ENCODE measurements at regions of chr4 and their contacts with region 1.

Region 1: GRCh38 chr4:138242076-138242833 is at the start of gene SLC7A11:
- DNase-seq: peak; percentile 93
- ATAC-seq: peak; percentile 90
- H3K4me3 ChIP-seq: peak within 1 kb of the TSS; percentile 81
- H3K27ac ChIP-seq: peak within 1 kb of the TSS; percentile 83
- H3K4me1 ChIP-seq: no peaks in the 10 kb centered on the region
- H3K27me3 ChIP-seq: no peaks in the 10 kb centered on the region
- CTCF ChIP-seq: no peak
- EP300 ChIP-seq: peak; percentile 42 to 68; a peak in 2 of 4 replicates
- POLR2A ChIP-seq: peak; percentile 97
- RAD21 ChIP-seq: no peak
- polyA plus RNA-seq, gene SLC7A11: 1.6 to 2.2 TPM

Region 2: DNA sequence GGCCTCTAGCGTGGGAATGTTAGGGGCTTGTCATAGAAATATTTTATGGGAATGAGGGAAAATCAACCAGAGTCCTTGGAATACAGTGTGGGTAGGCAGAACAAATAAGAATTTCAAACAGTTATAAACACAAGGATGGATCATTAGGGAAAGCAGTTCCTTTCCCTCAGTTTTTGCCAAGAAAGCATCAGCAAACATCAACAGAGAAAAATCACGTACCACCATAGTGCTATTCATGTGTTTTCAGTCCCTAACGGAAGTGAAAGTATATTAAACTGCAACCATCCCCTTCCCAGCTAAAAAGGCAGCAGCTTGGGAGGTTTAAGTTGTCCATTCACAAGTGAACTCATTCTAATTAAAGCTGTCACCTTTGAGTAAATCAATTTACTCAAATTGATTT is 375.6 kb before region 1 on chr4:
- CTCF ChIA-PET with region 1: no interaction called
- POLR2A ChIA-PET with region 1: no interaction called
- RAD21 ChIA-PET with region 1: no interaction called
- SMC1A ChIA-PET with region 1: no interaction called
- in situ Hi-C with region 1: no loop called
- intact Hi-C with region 1: no loop called
- DNase-seq: no peak
- ATAC-seq: no peak
- H3K4me3 ChIP-seq: no peak overlapping the region
- H3K27ac ChIP-seq: no peak overlapping the region
- H3K4me1 ChIP-seq: no peaks in the 10 kb centered on the region
- H3K27me3 ChIP-seq: no peaks in the 10 kb centered on the region
- CTCF ChIP-seq: no peak
- EP300 ChIP-seq: no peak
- POLR2A ChIP-seq: no peak
- RAD21 ChIP-seq: no peak

Region 3: GRCh38 chr4:138182838-138183426 is 59.3 kb before region 1 on chr4:
- CTCF ChIA-PET with region 1: interaction called, 21 read pairs
- POLR2A ChIA-PET with region 1: interaction called, 6 read pairs
- RAD21 ChIA-PET with region 1: interaction called, 26 read pairs
- SMC1A ChIA-PET with region 1: interaction called, 40 read pairs
- in situ Hi-C with region 1: no loop called
- intact Hi-C with region 1: no loop called
- DNase-seq: no peak
- ATAC-seq: peak; percentile 61
- H3K4me3 ChIP-seq: no peak overlapping the region
- H3K27ac ChIP-seq: no peak overlapping the region
- H3K4me1 ChIP-seq: no peaks in the 10 kb centered on the region
- H3K27me3 ChIP-seq: no peaks in the 10 kb centered on the region
- CTCF ChIP-seq: peak; percentile 35 to 67 (median 59); a peak in 5 of 6 replicates
- EP300 ChIP-seq: no peak
- POLR2A ChIP-seq: no peak
- RAD21 ChIP-seq: peak; percentile 84

Region 4: DNA sequence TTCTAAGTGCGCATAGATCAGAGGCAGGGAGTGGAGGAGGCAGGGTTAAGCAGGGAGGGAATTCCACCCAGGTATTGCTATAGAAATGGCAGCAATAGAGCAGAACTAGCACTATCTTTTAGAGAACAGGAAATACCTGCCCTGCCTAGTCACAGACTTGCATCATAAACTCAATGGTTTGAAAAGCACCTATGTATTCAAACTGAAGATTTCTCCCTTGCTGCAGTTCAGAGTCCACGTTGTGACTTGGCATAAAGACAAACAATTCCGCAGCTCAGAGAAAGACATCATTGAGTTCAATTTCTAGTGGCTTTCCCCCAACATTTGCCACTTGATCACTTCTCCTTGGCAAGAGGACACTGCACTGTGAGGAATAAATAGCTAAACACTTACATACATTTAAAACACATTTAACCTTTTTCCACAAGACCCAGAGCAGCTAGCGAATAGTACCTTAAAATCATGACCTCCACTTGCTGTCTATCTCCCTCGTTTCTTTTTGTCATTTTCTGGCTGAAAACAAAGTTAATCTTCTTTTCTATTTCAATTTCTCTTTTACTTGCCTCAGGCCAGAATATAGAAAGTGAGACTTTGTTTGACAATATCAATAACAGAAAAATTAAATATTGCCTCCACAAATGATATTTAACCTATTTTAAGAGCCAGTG is 42.6 kb before region 1 on chr4:
- CTCF ChIA-PET with region 1: interaction called, 8 read pairs
- POLR2A ChIA-PET with region 1: interaction called, 24 read pairs
- RAD21 ChIA-PET with region 1: interaction called, 56 read pairs
- SMC1A ChIA-PET with region 1: interaction called, 68 read pairs
- in situ Hi-C with region 1: no loop called
- intact Hi-C with region 1: no loop called
- DNase-seq: no peak
- ATAC-seq: peak; percentile 89
- H3K4me3 ChIP-seq: peak overlapping the region; percentile 53; the same call in 1 of the 2 replicates
- H3K27ac ChIP-seq: peak overlapping the region; percentile 74
- H3K4me1 ChIP-seq: peaks cover 3% of the 10 kb centered on the region; the same call in 1 of the 2 replicates
- H3K27me3 ChIP-seq: no peaks in the 10 kb centered on the region
- CTCF ChIP-seq: no peak
- EP300 ChIP-seq: no peak
- POLR2A ChIP-seq: no peak
- RAD21 ChIP-seq: no peak

Region 5: DNA sequence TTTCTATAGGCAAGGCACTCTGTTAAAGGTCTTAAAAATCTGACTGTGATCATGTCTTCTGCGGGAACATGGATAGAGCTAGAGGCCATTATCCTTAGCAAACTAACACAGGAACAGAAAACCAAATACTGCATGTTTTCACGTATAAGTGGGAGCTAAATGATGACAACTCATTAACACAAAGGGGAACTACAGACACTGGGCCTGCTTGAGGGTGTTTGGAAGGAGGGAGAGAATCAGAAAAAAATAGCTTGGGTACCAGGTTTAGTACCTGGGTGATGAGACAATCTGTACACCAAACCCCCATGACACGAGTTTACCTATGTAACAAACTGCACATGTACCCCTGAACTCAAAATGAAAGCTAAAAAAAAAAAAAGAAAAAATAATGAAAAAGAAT is 12.2 kb before region 1 on chr4:
- CTCF ChIA-PET with region 1: interaction called, 4 read pairs
- POLR2A ChIA-PET with region 1: interaction called, 22 read pairs
- RAD21 ChIA-PET with region 1: interaction called, 47 read pairs
- SMC1A ChIA-PET with region 1: interaction called, 25 read pairs
- in situ Hi-C with region 1: no loop called
- intact Hi-C with region 1: no loop called
- DNase-seq: no peak
- ATAC-seq: peak; percentile 44
- H3K4me3 ChIP-seq: no peak overlapping the region
- H3K27ac ChIP-seq: no peak overlapping the region
- H3K4me1 ChIP-seq: no peaks in the 10 kb centered on the region
- H3K27me3 ChIP-seq: no peaks in the 10 kb centered on the region
- CTCF ChIP-seq: no peak
- EP300 ChIP-seq: no peak
- POLR2A ChIP-seq: no peak
- RAD21 ChIP-seq: no peak

Region 6: GRCh38 chr4:138392751-138393308 is 150.6 kb after region 1 on chr4:
- CTCF ChIA-PET with region 1: interaction called, 3 read pairs
- POLR2A ChIA-PET with region 1: interaction called, 3 read pairs
- RAD21 ChIA-PET with region 1: interaction called, 3 read pairs
- SMC1A ChIA-PET with region 1: interaction called, 5 read pairs
- in situ Hi-C with region 1: no loop called
- intact Hi-C with region 1: loop called (anchors 5 kb)
- DNase-seq: peak; percentile 54
- ATAC-seq: peak; percentile 85
- H3K4me3 ChIP-seq: no peak overlapping the region
- H3K27ac ChIP-seq: peak overlapping the region; percentile 62
- H3K4me1 ChIP-seq: peaks cover 10% of the 10 kb centered on the region
- H3K27me3 ChIP-seq: no peaks in the 10 kb centered on the region
- CTCF ChIP-seq: no peak
- EP300 ChIP-seq: peak in 1 of 2 experiments; percentile 6; a peak in 1 of 4 replicates
- POLR2A ChIP-seq: no peak
- RAD21 ChIP-seq: no peak

Region 7: DNA sequence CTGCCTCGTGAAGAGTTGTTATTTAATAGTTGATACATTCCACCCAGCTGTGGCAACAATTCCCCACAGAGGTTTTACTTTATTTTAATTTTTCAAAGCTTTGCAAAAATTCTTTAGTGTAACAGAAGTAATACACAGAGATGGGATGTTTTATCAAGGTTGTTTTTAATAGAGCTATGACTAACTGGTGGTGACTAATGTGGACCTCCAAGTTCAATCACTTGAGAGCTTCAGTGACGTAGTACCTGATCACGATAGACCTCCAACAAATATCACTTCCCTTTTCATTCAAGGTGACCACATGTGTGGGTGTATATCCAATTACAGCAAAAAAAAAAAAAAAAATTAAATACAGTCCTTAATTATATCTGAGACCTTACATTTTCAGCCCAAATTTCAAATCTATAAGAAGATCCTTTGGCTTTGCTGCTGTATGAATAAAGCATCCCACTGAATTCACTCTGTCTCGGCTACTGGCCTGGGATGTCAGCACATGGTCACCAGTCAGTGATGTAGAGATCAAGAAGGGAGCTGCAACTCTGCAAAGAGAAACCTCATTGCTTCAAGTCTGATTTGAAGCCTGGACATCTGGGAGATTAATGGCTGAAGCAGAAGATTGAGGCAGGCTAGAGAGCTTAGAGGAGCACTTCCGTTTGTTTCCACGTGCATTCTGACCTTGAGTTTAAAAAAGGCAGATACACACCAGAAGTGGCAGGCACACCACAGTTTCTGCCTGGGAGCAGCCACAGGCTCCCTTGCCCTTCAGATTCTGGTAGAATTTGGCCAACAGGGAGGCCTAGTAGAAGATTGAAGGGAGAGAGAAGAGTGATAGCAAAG is 427.4 kb after region 1 on chr4:
- CTCF ChIA-PET with region 1: no interaction called
- POLR2A ChIA-PET with region 1: interaction called, 3 read pairs
- RAD21 ChIA-PET with region 1: interaction called, 4 read pairs
- SMC1A ChIA-PET with region 1: no interaction called
- in situ Hi-C with region 1: no loop called
- intact Hi-C with region 1: loop called (anchors 10 kb)
- DNase-seq: no peak
- ATAC-seq: peak; percentile 60
- H3K4me3 ChIP-seq: no peak overlapping the region
- H3K27ac ChIP-seq: no peak overlapping the region
- H3K4me1 ChIP-seq: no peaks in the 10 kb centered on the region; the same call in 1 of the 2 replicates
- H3K27me3 ChIP-seq: peaks cover 0 to 2% of the 10 kb centered on the region in 2 experiments; a peak in 1 of 4 replicates
- CTCF ChIP-seq: no peak
- EP300 ChIP-seq: no peak; a peak in 1 of 4 replicates
- POLR2A ChIP-seq: no peak
- RAD21 ChIP-seq: no peak

Measured in GM12878 (cell line).